ENCODE measurements at regions of chr12 and their contacts with region 1.

Region 1: GRCh38 chr12:42156232-42156631 is 11.6 kb upstream of the GXYLT1 start:
- DNase-seq: no peak
- H3K4me3 ChIP-seq: no peak overlapping the region
- H3K27ac ChIP-seq: no peak overlapping the region
- H3K4me1 ChIP-seq: no peaks in the 10 kb centered on the region
- H3K27me3 ChIP-seq: no peaks in the 10 kb centered on the region
- CTCF ChIP-seq: no peak
- POLR2A ChIP-seq: no peak

Region 2: GRCh38 chr12:42208574-42208973 is 52.3 kb after region 1 on chr12:
- intact Hi-C with region 1: loop called (anchors 10 kb)
- DNase-seq: no peak
- H3K4me3 ChIP-seq: no peak overlapping the region
- H3K27ac ChIP-seq: no peak overlapping the region
- H3K4me1 ChIP-seq: peaks cover 0 to 22% (median 0%) of the 10 kb centered on the region in 6 donors
- H3K27me3 ChIP-seq: no peaks in the 10 kb centered on the region
- CTCF ChIP-seq: no peak
- POLR2A ChIP-seq: no peak

Region 3: DNA sequence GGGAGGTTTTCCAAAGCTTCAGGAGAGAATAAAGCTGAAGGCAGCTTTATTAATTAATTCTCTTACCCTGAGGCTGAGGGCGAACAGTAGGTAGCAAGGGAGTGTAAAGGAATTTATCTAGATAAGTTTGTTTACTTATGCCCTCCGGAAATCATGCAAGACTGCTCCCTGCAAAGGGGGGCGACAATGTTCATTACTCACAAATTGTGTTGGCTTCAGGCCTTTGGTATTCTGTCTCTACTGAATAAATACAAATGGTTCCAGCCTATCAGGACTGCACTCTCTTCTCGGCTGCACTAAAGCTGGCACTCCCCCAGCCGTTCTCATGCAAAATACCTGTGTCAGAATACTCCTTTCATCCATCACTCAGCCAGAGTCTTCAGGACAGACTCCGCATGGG is 290.5 kb after region 1 on chr12:
- intact Hi-C with region 1: no loop called
- DNase-seq: no peak
- H3K4me3 ChIP-seq: no peak overlapping the region
- H3K27ac ChIP-seq: peak overlapping the region in 4 of 8 donors; percentile 5 to 62 (median 32)
- H3K4me1 ChIP-seq: peaks cover 4 to 49% (median 20%) of the 10 kb centered on the region in 6 donors
- H3K27me3 ChIP-seq: no peaks in the 10 kb centered on the region
- CTCF ChIP-seq: no peak
- POLR2A ChIP-seq: no peak

Measured in spleen (tissue), 13 donors.